ENCODE measurements at regions of chr9 and their contacts with region 1.

Region 1: DNA sequence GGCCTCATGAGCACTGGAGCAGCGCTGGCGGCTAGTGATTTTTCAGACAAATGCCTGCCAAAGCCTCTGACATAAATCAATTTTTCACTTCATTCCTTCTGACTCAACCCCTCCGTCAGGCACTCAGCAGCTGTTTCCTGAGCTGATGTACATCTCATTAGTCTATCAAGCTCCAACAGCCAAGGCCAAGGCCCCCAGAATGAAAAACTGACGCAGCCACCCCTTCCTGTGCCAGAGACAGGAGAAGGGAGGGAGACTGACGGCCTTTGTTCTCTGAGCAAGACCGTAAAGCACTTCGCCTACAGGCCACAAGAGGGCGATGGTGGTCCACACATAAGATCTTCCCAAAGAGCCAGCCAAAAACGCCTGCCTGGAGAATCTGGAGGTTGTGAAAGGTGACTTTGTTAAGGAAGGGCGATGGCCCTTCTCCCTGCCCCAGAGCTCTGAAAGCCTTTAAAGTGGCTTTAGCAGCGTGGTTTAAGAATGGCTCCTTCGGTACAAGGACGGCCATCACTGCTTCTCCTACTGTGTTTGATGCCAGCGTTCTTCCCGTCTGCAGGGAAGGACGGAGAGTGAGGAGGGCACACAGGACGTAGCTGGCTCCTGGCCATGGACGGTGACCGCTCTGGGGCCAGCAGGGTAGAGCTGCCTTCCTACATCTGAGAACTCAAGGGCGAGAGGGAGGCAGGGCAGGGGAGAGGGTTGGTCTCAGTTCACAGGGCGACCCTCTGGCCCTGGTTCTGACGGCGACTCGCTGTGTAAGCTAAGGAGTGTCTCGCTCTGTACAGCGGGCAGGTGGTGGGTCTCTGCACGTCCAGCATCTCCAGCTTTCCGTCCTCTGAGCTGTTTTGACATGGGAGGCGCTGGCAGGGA is 37.0 kb downstream of the ALG2 start:
- DNase-seq: peak; percentile 87
- H3K4me3 Mint-ChIP-seq: no peak overlapping the region
- H3K27ac Mint-ChIP-seq: peak overlapping the region; percentile 64
- H3K4me1 Mint-ChIP-seq: peaks cover 34% of the 10 kb centered on the region
- H3K27me3 Mint-ChIP-seq: peaks cover 3% of the 10 kb centered on the region

Region 2: GRCh38 chr9:98922721-98923435 is 261.8 kb before region 1 on chr9:
- CTCF ChIA-PET with region 1: no interaction called
- intact Hi-C with region 1: no loop called
- DNase-seq: no peak
- H3K4me3 Mint-ChIP-seq: no peak overlapping the region
- H3K27ac Mint-ChIP-seq: no peak overlapping the region
- H3K4me1 Mint-ChIP-seq: no peaks in the 10 kb centered on the region
- H3K27me3 Mint-ChIP-seq: no peaks in the 10 kb centered on the region

Region 3: DNA sequence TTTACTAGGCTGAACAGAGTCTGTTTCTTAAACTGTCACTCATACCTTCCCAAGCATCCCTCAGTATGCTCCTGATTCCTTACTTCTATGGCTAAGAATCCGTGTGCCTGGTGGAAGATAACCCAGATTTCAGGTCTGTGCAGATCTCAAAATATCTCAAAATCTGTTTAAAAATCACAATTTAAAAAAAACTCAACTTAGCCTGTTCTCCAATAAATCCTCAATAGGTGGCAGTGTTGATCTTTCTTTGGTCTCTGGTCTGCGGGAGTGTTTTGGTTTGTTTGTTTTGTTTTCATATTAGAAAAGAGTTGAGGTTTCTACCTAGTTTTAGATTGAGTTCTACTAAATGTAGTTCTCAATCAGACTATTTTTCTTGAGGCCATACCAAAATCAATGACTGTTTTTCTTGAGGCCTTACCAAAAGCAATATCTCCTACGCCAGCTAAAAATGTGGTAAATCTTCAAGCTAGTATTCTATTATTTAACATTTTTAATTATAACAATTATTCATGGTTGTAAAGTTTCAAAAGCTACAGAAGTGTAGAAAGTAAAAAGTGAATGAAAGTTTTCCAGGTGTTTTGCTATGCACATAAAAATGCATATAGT is 21.8 kb before region 1 on chr9:
- CTCF ChIA-PET with region 1: interaction called, 32 read pairs
- intact Hi-C with region 1: no loop called
- DNase-seq: no peak
- H3K4me3 Mint-ChIP-seq: no peak overlapping the region
- H3K27ac Mint-ChIP-seq: no peak overlapping the region
- H3K4me1 Mint-ChIP-seq: peaks cover 15% of the 10 kb centered on the region
- H3K27me3 Mint-ChIP-seq: peaks cover 12% of the 10 kb centered on the region

Region 4: DNA sequence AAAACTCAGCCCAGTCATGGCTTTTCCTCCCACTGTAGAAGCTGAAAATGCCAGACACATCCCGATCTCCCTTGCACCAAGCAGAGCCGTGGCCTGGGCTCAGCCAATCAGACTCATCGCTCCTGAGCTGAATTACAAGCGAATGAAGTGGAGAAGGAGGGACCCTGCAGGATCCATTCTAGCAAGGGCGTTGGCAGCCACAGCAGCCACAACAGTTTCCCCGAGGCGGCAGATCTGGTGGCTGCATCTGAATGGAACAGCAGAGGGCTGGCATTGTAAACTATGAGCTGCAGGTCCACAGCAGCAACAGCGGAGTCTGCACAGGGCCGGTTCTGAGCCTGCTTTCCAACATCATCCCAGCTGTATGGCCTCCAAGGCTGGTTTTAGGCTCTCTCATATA is 13.3 kb after region 1 on chr9:
- CTCF ChIA-PET with region 1: interaction called, 28 read pairs
- intact Hi-C with region 1: no loop called
- DNase-seq: no peak
- H3K4me3 Mint-ChIP-seq: no peak overlapping the region
- H3K27ac Mint-ChIP-seq: no peak overlapping the region
- H3K4me1 Mint-ChIP-seq: peaks cover 2% of the 10 kb centered on the region
- H3K27me3 Mint-ChIP-seq: no peaks in the 10 kb centered on the region

Region 5: GRCh38 chr9:99231711-99232110 is 47.0 kb after region 1 on chr9:
- CTCF ChIA-PET with region 1: interaction called, 21 read pairs
- intact Hi-C with region 1: no loop called
- DNase-seq: peak; percentile 69
- H3K4me3 Mint-ChIP-seq: no peak overlapping the region
- H3K27ac Mint-ChIP-seq: no peak overlapping the region
- H3K4me1 Mint-ChIP-seq: peaks cover 10% of the 10 kb centered on the region
- H3K27me3 Mint-ChIP-seq: no peaks in the 10 kb centered on the region

Region 6: GRCh38 chr9:99282406-99282805 is 97.7 kb after region 1 on chr9:
- CTCF ChIA-PET with region 1: no interaction called
- intact Hi-C with region 1: no loop called
- DNase-seq: no peak
- H3K4me3 Mint-ChIP-seq: no peak overlapping the region
- H3K27ac Mint-ChIP-seq: no peak overlapping the region
- H3K4me1 Mint-ChIP-seq: peaks cover 5% of the 10 kb centered on the region
- H3K27me3 Mint-ChIP-seq: peaks cover 19% of the 10 kb centered on the region

Region 7: DNA sequence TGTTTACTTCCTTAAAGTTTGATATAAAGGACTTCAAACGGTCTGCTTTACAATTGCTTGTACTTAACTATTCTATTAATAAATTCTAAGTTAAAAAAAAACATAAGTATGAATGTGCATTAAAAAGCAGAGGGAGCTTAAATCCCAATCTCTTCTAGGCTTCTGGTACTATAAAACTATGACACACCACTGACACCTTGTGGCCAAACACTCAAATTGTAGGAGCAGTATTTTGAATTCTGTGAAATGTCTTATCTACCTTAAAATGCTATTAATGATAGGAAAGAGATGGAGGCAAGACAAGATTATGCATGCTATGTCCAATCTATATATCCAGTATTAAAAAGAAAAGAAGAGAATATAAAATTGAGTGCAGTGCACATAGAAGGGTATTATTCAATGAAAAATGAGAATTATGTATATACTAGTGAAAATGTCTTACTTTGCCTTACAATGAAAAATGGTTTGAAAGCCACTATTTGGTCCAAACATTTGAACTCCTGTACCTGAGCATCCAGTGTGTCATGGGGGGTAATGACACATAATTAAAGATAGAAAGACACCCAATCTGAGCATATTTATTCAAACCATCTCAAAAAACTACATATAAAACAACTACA is 826.5 kb after region 1 on chr9:
- CTCF ChIA-PET with region 1: no interaction called
- intact Hi-C with region 1: loop called (anchors 1 kb)
- DNase-seq: peak; percentile 67
- H3K4me3 Mint-ChIP-seq: no peak overlapping the region
- H3K27ac Mint-ChIP-seq: no peak overlapping the region
- H3K4me1 Mint-ChIP-seq: no peaks in the 10 kb centered on the region
- H3K27me3 Mint-ChIP-seq: no peaks in the 10 kb centered on the region

Measured in activated naive CD4-positive, alpha-beta T cell treated with anti-CD3 and anti-CD28 coated beads for 36 hours (primary cell).